ENCODE measurements at regions of chr7 and their contacts with region 1.

Region 1: GRCh38 chr7:1569833-1570633 is at the start of gene PSMG3:
- DNase-seq: peak; percentile 86 to 87
- ATAC-seq: peak; percentile 83 to 84
- H3K4me3 ChIP-seq: peak within 1 kb of the TSS; percentile 77 to 98 (median 90)
- H3K27ac ChIP-seq: peak within 1 kb of the TSS; percentile 93 to 99 (median 94)
- H3K4me1 ChIP-seq: peaks cover 26 to 42% of the 10 kb centered on the region in 2 donors
- H3K27me3 ChIP-seq: no peaks in the 10 kb centered on the region
- CTCF ChIP-seq: peak; percentile 28 to 53 (median 37)
- POLR2A ChIP-seq: peak; percentile 82 to 85
- total RNA-seq, gene PSMG3: 25.4 to 46.4 (median 32.2) TPM

Region 2: GRCh38 chr7:2195400-2196246 is 625.6 kb after region 1 on chr7:
- in situ Hi-C with region 1: loop called in 2 of 4 experiments (anchors 25 kb)
- intact Hi-C with region 1: loop called (anchors 10 kb)
- DNase-seq: peak; percentile 58 to 74
- ATAC-seq: peak; percentile 54 to 62
- H3K4me3 ChIP-seq: no peak overlapping the region
- H3K27ac ChIP-seq: peak overlapping the region; percentile 29 to 73 (median 63)
- H3K4me1 ChIP-seq: peaks cover 35 to 43% of the 10 kb centered on the region in 2 donors
- H3K27me3 ChIP-seq: no peaks in the 10 kb centered on the region
- CTCF ChIP-seq: no peak
- POLR2A ChIP-seq: no peak